ENCODE measurements at regions of chr16 and their contacts with region 1.

Region 1: DNA sequence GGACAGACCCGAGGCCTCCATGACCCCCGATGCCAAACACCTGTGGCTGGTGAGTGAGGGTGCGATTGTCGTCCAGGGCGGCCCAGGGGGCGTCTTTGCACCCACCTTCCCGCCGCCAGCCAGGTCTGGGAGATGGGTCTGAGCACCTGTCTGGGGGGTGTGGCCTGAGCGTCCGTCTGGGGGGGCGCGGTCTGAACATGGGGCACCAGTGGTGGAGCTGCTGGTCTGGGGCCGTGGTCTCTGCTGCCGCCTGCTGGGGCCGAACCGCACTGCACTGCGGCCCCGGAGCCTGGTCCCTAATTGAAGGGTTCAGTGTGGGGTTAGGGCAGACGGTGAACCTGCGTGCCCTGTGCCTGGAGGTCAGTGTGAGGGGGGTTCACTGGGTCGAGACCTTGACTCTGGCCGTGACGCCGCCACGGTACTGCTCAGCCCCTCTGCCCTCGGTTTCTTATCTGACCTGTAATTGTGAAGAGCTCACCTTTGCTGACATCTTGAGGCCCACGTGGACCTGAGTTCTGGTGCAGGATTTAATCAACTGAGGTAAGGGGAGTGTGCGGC is 12.6 kb upstream of the TCF25 start:
- DNase-seq: peak; percentile 82
- ATAC-seq: peak; percentile 96
- H3K4me3 Mint-ChIP-seq: no peak overlapping the region
- H3K27ac Mint-ChIP-seq: no peak overlapping the region
- H3K4me1 Mint-ChIP-seq: peaks cover 25% of the 10 kb centered on the region
- H3K27me3 Mint-ChIP-seq: peaks cover 3% of the 10 kb centered on the region
- CTCF ChIP-seq: peak; percentile 49

Region 2: DNA sequence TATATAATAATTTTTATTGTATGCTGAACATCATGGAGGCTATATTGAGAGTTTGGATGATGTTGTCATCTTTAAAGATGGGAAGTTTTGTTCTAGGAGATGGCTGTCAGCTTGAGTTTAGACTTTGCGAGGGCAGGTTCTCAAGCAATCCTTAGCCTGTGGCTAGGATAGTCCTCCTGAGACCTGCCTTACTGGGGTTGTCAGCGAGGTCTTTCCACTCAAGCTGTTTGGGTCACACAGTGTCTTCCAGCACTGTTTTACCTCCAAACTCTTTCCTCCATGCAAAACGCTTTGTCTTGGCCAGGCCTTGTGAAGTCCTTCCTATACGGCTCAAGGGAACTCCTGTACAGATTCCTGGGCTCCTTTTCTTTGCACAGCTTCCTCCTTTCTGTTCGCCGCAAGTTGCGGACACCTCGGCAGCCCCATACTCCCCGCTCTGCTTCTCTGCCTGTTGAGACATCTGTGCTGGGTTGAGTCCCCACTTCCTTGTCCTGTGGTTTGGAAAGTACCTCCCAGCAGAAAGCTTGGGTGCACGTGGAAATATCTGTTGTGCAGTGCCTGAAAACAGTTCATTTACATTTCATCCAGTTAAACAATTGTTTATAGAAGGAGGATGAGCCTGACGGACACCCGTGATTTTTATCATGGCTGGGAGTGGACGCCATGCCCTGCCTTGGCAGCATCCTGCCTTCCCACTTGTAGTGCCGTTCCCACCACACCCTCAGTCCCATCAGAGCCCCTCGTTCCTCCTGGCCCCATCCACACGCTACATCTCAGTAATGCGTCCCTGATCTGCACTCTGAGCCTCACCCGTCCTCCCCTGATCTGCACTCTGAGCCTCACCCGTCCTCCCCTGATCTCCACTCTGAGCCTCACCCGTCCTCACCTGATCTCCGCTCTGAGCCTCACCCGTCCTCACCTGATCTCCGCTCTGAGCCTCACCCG is 828.8 kb before region 1 on chr16:
- CTCF ChIA-PET with region 1: no interaction called
- POLR2A ChIA-PET with region 1: no interaction called
- intact Hi-C with region 1: no loop called
- DNase-seq: peak; percentile 57
- ATAC-seq: peak; percentile 99
- H3K4me3 Mint-ChIP-seq: peak overlapping the region; percentile 66
- H3K27ac Mint-ChIP-seq: peak overlapping the region; percentile 84
- H3K4me1 Mint-ChIP-seq: peaks cover 27% of the 10 kb centered on the region
- H3K27me3 Mint-ChIP-seq: peaks cover 7% of the 10 kb centered on the region
- CTCF ChIP-seq: no peak

Region 3: GRCh38 chr16:89615596-89616090 is 245.2 kb before region 1 on chr16:
- CTCF ChIA-PET with region 1: interaction called, 14 read pairs
- POLR2A ChIA-PET with region 1: no interaction called
- intact Hi-C with region 1: loop called (anchors 2 kb)
- DNase-seq: peak; percentile 52
- ATAC-seq: no peak
- H3K4me3 Mint-ChIP-seq: no peak overlapping the region
- H3K27ac Mint-ChIP-seq: no peak overlapping the region
- H3K4me1 Mint-ChIP-seq: peaks cover 12% of the 10 kb centered on the region
- H3K27me3 Mint-ChIP-seq: peaks cover 3% of the 10 kb centered on the region
- CTCF ChIP-seq: no peak

Region 4: GRCh38 chr16:89749647-89750046 is 111.2 kb before region 1 on chr16:
- CTCF ChIA-PET with region 1: interaction called, 15 read pairs
- POLR2A ChIA-PET with region 1: interaction called, 3 read pairs
- intact Hi-C with region 1: loop called (anchors 1 kb)
- DNase-seq: no peak
- ATAC-seq: no peak
- H3K4me3 Mint-ChIP-seq: no peak overlapping the region
- H3K27ac Mint-ChIP-seq: no peak overlapping the region
- H3K4me1 Mint-ChIP-seq: peaks cover 8% of the 10 kb centered on the region
- H3K27me3 Mint-ChIP-seq: no peaks in the 10 kb centered on the region
- CTCF ChIP-seq: no peak

Region 5: GRCh38 chr16:89779231-89779908 is 81.5 kb before region 1 on chr16:
- CTCF ChIA-PET with region 1: no interaction called
- POLR2A ChIA-PET with region 1: no interaction called
- intact Hi-C with region 1: no loop called
- DNase-seq: no peak
- ATAC-seq: no peak
- H3K4me3 Mint-ChIP-seq: no peak overlapping the region
- H3K27ac Mint-ChIP-seq: no peak overlapping the region
- H3K4me1 Mint-ChIP-seq: no peaks in the 10 kb centered on the region
- H3K27me3 Mint-ChIP-seq: no peaks in the 10 kb centered on the region
- CTCF ChIP-seq: no peak

Region 6: GRCh38 chr16:89795676-89796075 is 65.2 kb before region 1 on chr16:
- CTCF ChIA-PET with region 1: interaction called, 9 read pairs
- POLR2A ChIA-PET with region 1: no interaction called
- intact Hi-C with region 1: loop called (anchors 2 kb)
- DNase-seq: no peak
- ATAC-seq: no peak
- H3K4me3 Mint-ChIP-seq: no peak overlapping the region
- H3K27ac Mint-ChIP-seq: no peak overlapping the region
- H3K4me1 Mint-ChIP-seq: peaks cover 2% of the 10 kb centered on the region
- H3K27me3 Mint-ChIP-seq: no peaks in the 10 kb centered on the region
- CTCF ChIP-seq: no peak

Region 7: GRCh38 chr16:89934611-89935553 is 74.1 kb after region 1 on chr16:
- CTCF ChIA-PET with region 1: no interaction called
- POLR2A ChIA-PET with region 1: no interaction called
- intact Hi-C with region 1: no loop called
- DNase-seq: no peak
- ATAC-seq: no peak
- H3K4me3 Mint-ChIP-seq: no peak overlapping the region
- H3K27ac Mint-ChIP-seq: no peak overlapping the region
- H3K4me1 Mint-ChIP-seq: peaks cover 7% of the 10 kb centered on the region
- H3K27me3 Mint-ChIP-seq: peaks cover 17% of the 10 kb centered on the region
- CTCF ChIP-seq: no peak

Region 8: DNA sequence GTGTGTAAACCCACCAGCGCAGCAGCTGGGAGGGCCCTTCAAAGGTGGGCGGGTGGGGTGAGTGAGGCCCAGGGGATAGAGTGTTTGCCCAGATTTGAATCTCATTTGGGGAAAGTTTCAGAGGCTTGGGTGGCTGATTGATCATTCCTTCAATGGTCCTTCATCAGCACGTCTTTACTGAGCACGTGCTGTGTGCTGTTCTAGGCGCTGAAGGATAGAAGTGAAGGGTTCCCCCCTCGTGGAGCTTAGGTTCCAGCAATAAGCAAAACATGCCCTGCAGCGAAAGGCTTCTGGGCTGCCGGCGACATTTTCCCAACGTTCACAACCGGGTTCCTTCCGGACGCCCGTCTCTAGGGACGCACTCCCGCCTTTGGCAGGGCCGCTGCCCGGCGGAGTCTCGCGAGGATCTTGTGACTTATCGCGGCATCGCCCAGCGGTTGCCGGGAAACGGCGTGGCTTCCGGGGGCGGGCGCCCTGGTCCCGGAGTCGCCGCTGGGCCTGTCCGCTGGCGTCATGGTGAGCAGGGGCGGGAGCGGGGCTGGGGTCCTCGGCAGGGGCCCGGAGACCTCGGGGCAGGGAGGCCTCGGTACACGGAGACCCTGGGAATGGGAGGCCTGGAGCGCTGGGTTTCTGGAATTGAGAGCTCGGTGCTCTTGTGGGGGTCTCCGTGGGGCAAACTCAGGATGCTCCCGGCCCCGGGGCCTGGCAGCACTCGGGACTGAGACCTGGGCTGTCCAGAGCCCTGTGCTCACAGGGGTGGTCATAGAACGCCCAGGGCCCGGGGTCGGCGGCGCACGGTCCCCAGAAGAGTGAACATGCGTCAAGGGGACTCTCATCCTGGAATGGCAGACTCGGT is 161.6 kb after region 1 on chr16:
- CTCF ChIA-PET with region 1: no interaction called
- POLR2A ChIA-PET with region 1: interaction called, 15 read pairs
- intact Hi-C with region 1: no loop called
- DNase-seq: peak; percentile 68
- ATAC-seq: peak; percentile 73
- H3K4me3 Mint-ChIP-seq: peak overlapping the region; percentile 77
- H3K27ac Mint-ChIP-seq: no peak overlapping the region
- H3K4me1 Mint-ChIP-seq: peaks cover 32% of the 10 kb centered on the region
- H3K27me3 Mint-ChIP-seq: peaks cover 7% of the 10 kb centered on the region
- CTCF ChIP-seq: no peak

Measured in activated B cell treated with CpG ODN at 0.5 μM for 24 hours (primary cell).